ENCODE measurements at regions of chr12 and their contacts with region 1.

Region 1: DNA sequence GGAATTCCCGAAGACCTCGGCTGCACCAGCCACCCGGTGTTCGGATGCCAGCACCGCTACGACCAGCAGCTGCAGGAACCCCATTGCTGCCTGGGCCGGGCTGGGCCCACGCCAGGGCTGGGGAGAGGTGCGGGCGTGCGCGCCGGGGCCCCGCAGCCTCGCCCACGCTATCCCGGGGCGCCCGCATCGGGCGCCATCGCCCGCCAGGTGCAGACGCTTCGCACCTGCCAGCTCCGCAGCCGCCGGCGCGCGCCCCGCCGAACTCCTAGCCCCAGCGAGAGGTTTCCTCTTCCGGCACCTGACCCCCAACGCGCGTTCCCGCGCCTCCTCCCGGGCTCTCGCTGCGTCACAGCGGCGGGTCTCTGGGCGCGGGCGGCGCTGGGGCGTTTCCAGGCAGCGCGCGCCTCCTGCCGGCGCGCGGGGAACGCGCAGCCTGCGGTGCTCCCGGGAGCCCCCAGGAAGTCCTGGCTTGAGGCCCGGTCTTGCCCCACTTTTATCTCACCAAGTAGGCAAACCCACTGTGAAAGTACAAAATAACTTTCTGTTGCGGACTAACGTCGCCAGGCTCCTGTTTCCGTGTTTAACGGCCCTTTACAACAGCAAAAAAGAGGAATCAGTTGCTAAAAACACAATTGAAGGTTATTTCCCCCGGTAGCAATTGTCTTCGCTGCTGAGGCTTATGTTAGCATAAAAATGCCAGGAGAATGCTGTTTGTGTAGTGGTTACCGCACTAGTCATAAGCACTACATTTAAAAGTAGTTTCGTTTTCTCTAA is at the start of gene TM7SF3:
- DNase-seq: peak; percentile 97 to 98 (median 97)
- H3K4me3 ChIP-seq: peak within 1 kb of the TSS; percentile 71 to 82
- H3K4me3 Mint-ChIP-seq: peak within 1 kb of the TSS; percentile 93 to 97 (median 94)
- H3K27ac ChIP-seq: peak within 1 kb of the TSS; percentile 92
- H3K27ac Mint-ChIP-seq: peak within 1 kb of the TSS; percentile 92 to 98 (median 96)
- H3K4me1 ChIP-seq: peaks cover 51% of the 10 kb centered on the region
- H3K4me1 Mint-ChIP-seq: peaks cover 31 to 59% (median 43%) of the 10 kb centered on the region in 4 donors
- H3K27me3 ChIP-seq: no peaks in the 10 kb centered on the region
- H3K27me3 Mint-ChIP-seq: no peaks in the 10 kb centered on the region
- total RNA-seq, gene TM7SF3: 27.7 to 29.2 TPM

Region 2: GRCh38 chr12:26853303-26854030 is 160.8 kb before region 1 on chr12:
- CTCF ChIA-PET with region 1: interaction called, 8 read pairs
- POLR2A ChIA-PET with region 1: interaction called, 3 read pairs
- intact Hi-C with region 1: loop called (anchors 1 kb)
- DNase-seq: peak; percentile 59 to 69 (median 67)
- H3K4me3 ChIP-seq: no peak overlapping the region
- H3K4me3 Mint-ChIP-seq: no peak overlapping the region
- H3K27ac ChIP-seq: no peak overlapping the region
- H3K27ac Mint-ChIP-seq: peak overlapping the region in 2 of 7 donors; percentile 10 to 14
- H3K4me1 ChIP-seq: peaks cover 4% of the 10 kb centered on the region
- H3K4me1 Mint-ChIP-seq: no peaks in the 10 kb centered on the region
- H3K27me3 ChIP-seq: no peaks in the 10 kb centered on the region
- H3K27me3 Mint-ChIP-seq: peaks cover 3 to 6% of the 10 kb centered on the region in 2 donors

Region 3: GRCh38 chr12:26971963-26972362 is 42.3 kb before region 1 on chr12:
- CTCF ChIA-PET with region 1: interaction called, 3 read pairs
- POLR2A ChIA-PET with region 1: interaction called, 4 read pairs
- intact Hi-C with region 1: loop called (anchors 5 kb)
- DNase-seq: peak; percentile 58 to 89 (median 68)
- H3K4me3 ChIP-seq: no peak overlapping the region
- H3K4me3 Mint-ChIP-seq: peak overlapping the region in 5 of 8 donors; percentile 41 to 68 (median 58)
- H3K27ac ChIP-seq: peak overlapping the region; percentile 43
- H3K27ac Mint-ChIP-seq: peak overlapping the region; percentile 60 to 90 (median 74)
- H3K4me1 ChIP-seq: peaks cover 24% of the 10 kb centered on the region
- H3K4me1 Mint-ChIP-seq: peaks cover 16 to 28% (median 21%) of the 10 kb centered on the region in 4 donors
- H3K27me3 ChIP-seq: no peaks in the 10 kb centered on the region
- H3K27me3 Mint-ChIP-seq: no peaks in the 10 kb centered on the region

Region 4: DNA sequence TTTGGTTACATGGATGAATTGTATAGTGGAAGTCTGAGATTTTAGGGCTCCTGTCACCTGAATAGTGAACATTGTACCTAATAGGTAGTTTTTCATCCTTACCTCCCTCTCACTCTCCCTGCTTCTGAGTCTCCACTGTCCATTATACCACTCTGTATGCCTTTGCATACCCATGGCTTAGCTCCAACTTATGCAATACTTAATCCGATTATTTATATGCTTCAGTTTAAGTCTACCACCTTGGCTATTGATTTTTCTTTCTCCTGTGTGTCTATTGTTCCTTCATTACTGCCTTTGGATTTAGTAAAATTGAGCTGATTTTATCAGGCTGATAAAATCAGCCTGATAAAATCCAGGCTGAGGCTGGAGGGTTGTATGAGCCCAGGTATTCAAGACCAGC is 98.6 kb after region 1 on chr12:
- CTCF ChIA-PET with region 1: no interaction called
- POLR2A ChIA-PET with region 1: no interaction called
- intact Hi-C with region 1: no loop called
- DNase-seq: no peak
- H3K4me3 ChIP-seq: no peak overlapping the region
- H3K4me3 Mint-ChIP-seq: no peak overlapping the region
- H3K27ac ChIP-seq: no peak overlapping the region
- H3K27ac Mint-ChIP-seq: no peak overlapping the region
- H3K4me1 ChIP-seq: peaks cover 8% of the 10 kb centered on the region
- H3K4me1 Mint-ChIP-seq: peaks cover 0 to 11% (median 6%) of the 10 kb centered on the region in 4 donors
- H3K27me3 ChIP-seq: no peaks in the 10 kb centered on the region
- H3K27me3 Mint-ChIP-seq: no peaks in the 10 kb centered on the region

Region 5: DNA sequence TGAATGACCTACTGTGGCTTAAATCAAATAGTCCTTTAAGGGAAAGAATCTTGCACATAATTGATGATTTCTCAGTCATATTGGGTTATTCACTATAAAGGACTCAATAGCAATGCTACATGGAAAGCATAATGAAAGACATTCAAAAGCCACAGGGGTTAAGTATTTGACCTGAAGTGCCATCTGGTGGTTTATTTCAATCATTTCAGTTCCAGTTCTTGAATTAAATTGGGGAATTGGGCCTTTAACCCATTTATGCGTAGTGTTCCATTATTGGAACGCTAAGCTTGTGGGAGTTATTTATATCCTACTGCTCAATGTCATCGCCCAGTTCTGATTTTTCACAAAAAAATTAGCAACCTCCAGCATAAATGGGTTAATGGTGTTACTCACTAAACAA is 109.4 kb after region 1 on chr12:
- CTCF ChIA-PET with region 1: interaction called, 3 read pairs
- POLR2A ChIA-PET with region 1: no interaction called
- intact Hi-C with region 1: loop called (anchors 1 kb)
- DNase-seq: peak in 2 of 5 donors; percentile 10
- H3K4me3 ChIP-seq: no peak overlapping the region
- H3K4me3 Mint-ChIP-seq: no peak overlapping the region
- H3K27ac ChIP-seq: no peak overlapping the region
- H3K27ac Mint-ChIP-seq: no peak overlapping the region
- H3K4me1 ChIP-seq: no peaks in the 10 kb centered on the region
- H3K4me1 Mint-ChIP-seq: no peaks in the 10 kb centered on the region
- H3K27me3 ChIP-seq: no peaks in the 10 kb centered on the region
- H3K27me3 Mint-ChIP-seq: no peaks in the 10 kb centered on the region

Region 6: GRCh38 chr12:27305673-27306456 is 291.6 kb after region 1 on chr12:
- CTCF ChIA-PET with region 1: interaction called, 84 read pairs
- POLR2A ChIA-PET with region 1: interaction called, 6 read pairs
- intact Hi-C with region 1: loop called (anchors 1 kb)
- DNase-seq: peak in 4 of 5 donors; percentile 28 to 42 (median 36)
- H3K4me3 ChIP-seq: no peak overlapping the region
- H3K4me3 Mint-ChIP-seq: no peak overlapping the region
- H3K27ac ChIP-seq: no peak overlapping the region
- H3K27ac Mint-ChIP-seq: peak overlapping the region in 4 of 7 donors; percentile 29 to 35 (median 32)
- H3K4me1 ChIP-seq: no peaks in the 10 kb centered on the region
- H3K4me1 Mint-ChIP-seq: no peaks in the 10 kb centered on the region
- H3K27me3 ChIP-seq: no peaks in the 10 kb centered on the region
- H3K27me3 Mint-ChIP-seq: no peaks in the 10 kb centered on the region

Measured in CD4-positive, alpha-beta memory T cell (primary cell).